WTC11 (cell line): ENCODE measurements at regions of chr15 and their contacts with region 1.

Region 1: GRCh38 chr15:40782580-40783227 is 12.9 kb downstream of the C15orf62 start:
- DNase-seq: peak; percentile 75
- ATAC-seq: peak; percentile 74
- H3K4me3 Mint-ChIP-seq: no peak overlapping the region
- H3K27ac Mint-ChIP-seq: peak overlapping the region; percentile 54
- H3K4me1 Mint-ChIP-seq: peaks cover 37% of the 10 kb centered on the region
- H3K27me3 Mint-ChIP-seq: no peaks in the 10 kb centered on the region
- CTCF ChIP-seq: no peak

Region 2: DNA sequence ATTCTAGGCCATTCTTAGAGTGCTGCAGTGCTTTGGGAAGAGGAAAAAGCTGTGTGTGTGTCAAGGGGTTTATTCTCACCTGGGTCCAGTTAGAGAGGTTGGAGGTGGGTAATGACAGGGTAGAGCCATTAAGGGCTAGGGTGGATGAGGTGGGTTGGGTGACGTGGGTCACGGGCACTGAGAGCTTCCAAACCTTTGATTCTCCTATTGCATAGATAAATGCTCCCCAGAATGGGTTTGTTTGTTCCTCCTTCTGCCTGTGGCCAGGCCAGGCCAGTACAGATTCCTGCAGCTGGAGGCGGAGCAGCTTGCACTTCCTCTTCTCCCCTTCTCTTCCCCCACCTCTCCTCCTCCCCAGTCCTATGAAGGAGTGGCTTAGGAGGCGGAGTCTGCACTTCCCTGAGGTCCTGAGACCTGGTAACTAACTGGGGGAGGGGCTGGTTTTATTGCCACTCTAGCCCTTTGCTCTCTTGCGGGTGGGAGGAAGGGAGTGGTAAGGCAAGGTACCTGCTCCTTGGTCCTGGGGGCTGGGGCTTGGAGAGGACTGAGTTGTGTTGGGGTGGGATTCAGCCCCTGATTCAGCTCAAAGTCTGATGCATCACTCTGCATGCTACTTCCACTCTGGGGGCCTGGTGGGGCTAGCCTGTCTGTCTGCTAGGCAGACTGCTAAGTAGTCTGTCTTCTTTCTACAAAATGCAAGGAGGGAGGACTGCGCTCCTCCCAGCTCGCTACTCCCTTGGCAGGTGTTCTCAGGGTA is 64.7 kb after region 1 on chr15:
- CTCF ChIA-PET with region 1: interaction called, 15 read pairs
- POLR2A ChIA-PET with region 1: interaction called, 7 read pairs
- DNase-seq: no peak
- ATAC-seq: peak; percentile 27
- H3K4me3 Mint-ChIP-seq: peak overlapping the region; percentile 93
- H3K27ac Mint-ChIP-seq: peak overlapping the region; percentile 57
- H3K4me1 Mint-ChIP-seq: peaks cover 41% of the 10 kb centered on the region
- H3K27me3 Mint-ChIP-seq: no peaks in the 10 kb centered on the region
- CTCF ChIP-seq: no peak

Region 3: DNA sequence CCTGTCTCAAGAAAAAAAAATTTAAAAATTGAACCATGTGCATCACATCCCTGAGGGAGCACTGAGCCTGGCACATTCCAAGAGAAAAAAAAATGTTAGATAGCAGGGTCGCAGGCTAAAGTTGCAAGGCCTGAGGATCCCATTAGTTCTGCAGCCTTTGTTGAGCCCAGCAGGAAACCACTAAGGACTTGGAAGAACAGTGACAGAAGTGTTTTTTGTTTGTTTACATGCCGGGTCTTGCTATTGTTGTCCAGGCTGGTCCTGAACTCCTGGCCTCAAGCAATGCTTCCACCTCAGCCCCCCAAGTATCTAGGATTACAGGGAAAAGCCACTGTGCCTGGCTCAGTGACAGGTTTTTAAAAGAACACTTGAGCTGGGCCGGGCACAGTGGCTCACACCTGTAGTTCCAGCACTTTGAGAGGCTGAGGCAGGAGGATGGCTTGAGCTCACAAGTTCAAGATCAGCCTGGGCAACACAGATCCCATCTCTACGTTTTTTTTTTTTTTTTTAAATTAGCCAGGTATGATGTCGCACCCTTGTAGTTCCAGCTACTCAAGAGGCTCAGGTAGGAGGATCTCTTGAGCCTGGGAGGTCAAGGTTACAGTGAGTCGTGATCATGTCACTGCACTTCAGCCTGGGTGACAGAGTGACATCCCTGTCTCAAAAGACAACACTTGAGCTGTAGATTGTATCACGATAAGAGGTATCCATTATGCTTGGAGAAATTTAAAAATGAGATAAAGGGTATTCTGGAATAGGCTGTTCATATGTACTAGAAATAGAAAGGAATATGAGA is 185.8 kb after region 1 on chr15:
- CTCF ChIA-PET with region 1: no interaction called
- POLR2A ChIA-PET with region 1: no interaction called
- DNase-seq: no peak
- ATAC-seq: peak; percentile 62
- H3K4me3 Mint-ChIP-seq: no peak overlapping the region
- H3K27ac Mint-ChIP-seq: no peak overlapping the region
- H3K4me1 Mint-ChIP-seq: peaks cover 31% of the 10 kb centered on the region
- H3K27me3 Mint-ChIP-seq: no peaks in the 10 kb centered on the region
- CTCF ChIP-seq: no peak

Region 4: GRCh38 chr15:41085029-41085428 is 302.3 kb after region 1 on chr15:
- CTCF ChIA-PET with region 1: no interaction called
- POLR2A ChIA-PET with region 1: no interaction called
- DNase-seq: no peak
- ATAC-seq: no peak
- H3K4me3 Mint-ChIP-seq: no peak overlapping the region
- H3K27ac Mint-ChIP-seq: no peak overlapping the region
- H3K4me1 Mint-ChIP-seq: no peaks in the 10 kb centered on the region
- H3K27me3 Mint-ChIP-seq: no peaks in the 10 kb centered on the region
- CTCF ChIP-seq: no peak